Activated CD4-positive, alpha-beta memory T cell treated with anti-CD3 and anti-CD28 coated beads, Interleukin-2, amount 10 ng/mL, durations not matched to agents 7 days and 5 days (primary cell): ENCODE measurements at regions of chr16 and their contacts with region 1.

Region 1: DNA sequence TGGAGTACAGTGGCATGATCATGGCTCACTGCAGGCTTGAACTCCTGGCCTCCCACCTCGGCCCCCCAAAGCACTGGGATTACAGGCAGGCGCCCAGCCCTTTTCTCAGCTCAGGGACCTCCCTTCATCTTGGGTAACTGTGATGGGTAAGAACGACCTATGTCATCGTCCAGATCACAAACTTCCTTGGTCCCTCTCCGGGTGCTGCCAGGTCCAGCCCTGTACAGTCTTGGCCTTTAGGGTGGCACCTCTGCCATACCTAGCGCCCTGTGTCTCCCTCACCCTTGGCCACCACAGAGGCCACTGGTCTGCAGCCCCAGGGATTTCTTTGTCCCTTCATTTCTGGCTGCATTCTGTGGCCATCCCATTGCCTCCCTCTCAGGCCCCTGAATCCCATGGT is 29.7 kb upstream of the ZFP90 start:
- DNase-seq: no peak
- H3K4me3 Mint-ChIP-seq: no peak overlapping the region
- H3K27ac Mint-ChIP-seq: no peak overlapping the region
- H3K4me1 Mint-ChIP-seq: peaks cover 2% of the 10 kb centered on the region
- H3K27me3 Mint-ChIP-seq: peaks cover 20% of the 10 kb centered on the region

Region 2: DNA sequence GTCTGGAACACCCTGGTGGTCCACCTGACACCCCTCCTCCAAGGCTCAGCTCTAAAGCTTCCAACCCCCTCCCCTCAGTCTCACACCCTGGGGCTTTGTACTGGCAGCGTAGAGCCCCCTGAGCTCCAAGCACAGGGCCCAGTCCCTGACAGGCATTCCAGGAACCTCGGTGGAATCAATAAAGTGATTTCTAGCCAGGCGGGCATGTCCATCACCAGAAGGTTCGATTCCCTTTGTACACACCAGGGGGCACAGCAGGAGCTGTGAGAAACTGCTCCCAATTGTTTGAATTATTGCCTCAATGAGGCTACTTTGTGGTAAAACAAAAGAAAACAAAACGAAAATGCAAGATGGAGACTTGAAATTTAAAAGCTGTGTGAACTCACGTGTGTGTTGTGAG is 112.9 kb before region 1 on chr16:
- CTCF ChIA-PET with region 1: interaction called, 40 read pairs
- POLR2A ChIA-PET with region 1: interaction called, 6 read pairs
- DNase-seq: peak; percentile 58
- H3K4me3 Mint-ChIP-seq: no peak overlapping the region
- H3K27ac Mint-ChIP-seq: no peak overlapping the region
- H3K4me1 Mint-ChIP-seq: peaks cover 18% of the 10 kb centered on the region
- H3K27me3 Mint-ChIP-seq: peaks cover 14% of the 10 kb centered on the region

Region 3: GRCh38 chr16:68445458-68445857 is 63.9 kb before region 1 on chr16:
- CTCF ChIA-PET with region 1: interaction called, 10 read pairs
- POLR2A ChIA-PET with region 1: no interaction called
- DNase-seq: peak; percentile 68
- H3K4me3 Mint-ChIP-seq: no peak overlapping the region
- H3K27ac Mint-ChIP-seq: no peak overlapping the region
- H3K4me1 Mint-ChIP-seq: peaks cover 14% of the 10 kb centered on the region
- H3K27me3 Mint-ChIP-seq: peaks cover 44% of the 10 kb centered on the region

Region 4: DNA sequence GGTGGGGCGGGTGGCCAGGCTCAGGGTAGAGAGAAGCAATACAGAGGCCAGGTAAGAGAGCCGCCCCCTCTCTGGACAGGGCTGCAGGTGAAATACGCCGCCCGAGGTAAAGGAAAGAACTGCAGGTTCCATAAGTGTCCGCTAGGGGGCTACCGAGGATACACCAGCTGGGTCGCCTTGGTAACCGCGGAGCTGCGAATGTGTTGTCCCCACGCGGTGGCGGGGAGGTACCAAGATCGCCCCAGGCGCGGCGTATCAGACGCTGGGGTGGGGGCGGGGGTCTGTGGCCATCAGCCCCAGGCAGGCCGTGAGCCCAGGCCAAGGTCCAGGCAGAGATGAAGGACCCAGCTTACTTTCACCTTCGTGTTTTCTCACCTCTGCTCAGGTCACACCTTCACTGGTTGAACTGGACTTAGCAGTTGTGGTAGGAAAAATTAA is 11.3 kb after region 1 on chr16:
- CTCF ChIA-PET with region 1: interaction called, 16 read pairs
- POLR2A ChIA-PET with region 1: no interaction called
- DNase-seq: peak; percentile 87
- H3K4me3 Mint-ChIP-seq: no peak overlapping the region
- H3K27ac Mint-ChIP-seq: no peak overlapping the region
- H3K4me1 Mint-ChIP-seq: peaks cover 6% of the 10 kb centered on the region
- H3K27me3 Mint-ChIP-seq: peaks cover 5% of the 10 kb centered on the region

Region 5: GRCh38 chr16:68538880-68539701 is 29.7 kb after region 1 on chr16 and contains the start of gene ZFP90:
- CTCF ChIA-PET with region 1: no interaction called
- POLR2A ChIA-PET with region 1: no interaction called
- DNase-seq: peak; percentile 88
- H3K4me3 Mint-ChIP-seq: peak within 1 kb of the TSS; percentile 90
- H3K27ac Mint-ChIP-seq: peak within 1 kb of the TSS; percentile 95
- H3K4me1 Mint-ChIP-seq: peaks cover 19% of the 10 kb centered on the region
- H3K27me3 Mint-ChIP-seq: no peaks in the 10 kb centered on the region
- total RNA-seq, gene ZFP90: 35.2 to 36.5 TPM